Heart right ventricle (tissue), 16 donors: ENCODE measurements at regions of chr4 and their contacts with region 1.

Region 1: DNA sequence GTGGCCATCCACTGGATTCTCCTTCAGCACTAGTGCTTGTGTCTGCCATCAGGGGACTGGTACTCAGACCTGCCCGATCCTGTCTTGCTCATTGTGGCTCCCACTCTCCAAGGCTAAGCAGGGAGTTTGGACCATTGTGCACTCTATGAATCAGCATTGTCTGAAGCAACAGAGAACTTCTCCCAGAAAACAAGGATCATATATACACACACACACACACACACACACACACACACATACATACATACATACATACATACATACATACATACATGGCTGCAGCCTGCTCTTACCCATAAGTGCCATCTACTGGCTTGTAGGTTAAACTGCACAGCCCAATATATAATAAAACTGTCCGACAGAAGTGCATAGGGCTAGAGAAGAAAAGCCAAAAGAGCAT is 345.3 kb upstream of the LCORL start:
- DNase-seq: no peak
- ATAC-seq: peak in 4 of 8 donors; percentile 15 to 53 (median 46)
- H3K4me3 ChIP-seq: no peak overlapping the region
- H3K27ac ChIP-seq: no peak overlapping the region
- H3K4me1 ChIP-seq: no peaks in the 10 kb centered on the region
- H3K27me3 ChIP-seq: no peaks in the 10 kb centered on the region
- CTCF ChIP-seq: peak in 8 of 9 donors; percentile 7 to 55 (median 50)

Region 2: DNA sequence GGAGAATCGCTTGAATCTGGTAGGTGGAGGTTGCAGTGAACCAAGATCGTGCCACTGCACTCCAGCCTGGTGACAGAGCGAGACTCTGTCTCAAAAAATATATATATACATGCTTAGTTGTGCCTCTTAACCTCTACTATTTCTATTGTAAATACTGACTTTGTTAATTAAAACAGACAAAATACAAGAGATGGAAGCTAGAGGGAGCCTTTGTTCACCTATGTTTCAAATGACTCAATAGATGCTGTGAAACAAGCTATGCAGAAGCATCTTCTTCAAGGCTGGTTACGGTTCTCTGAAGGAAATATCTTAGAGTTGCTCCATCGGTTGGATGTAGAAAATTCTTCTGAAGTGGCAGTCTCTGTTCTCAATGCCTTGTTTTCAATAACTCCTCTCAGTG is 549.9 kb before region 1 on chr4:
- intact Hi-C with region 1: loop called in 9 of 10 experiments (anchors 5 to 10 kb)
- DNase-seq: no peak
- ATAC-seq: peak in 3 of 8 donors; percentile 50 to 73 (median 52)
- H3K4me3 ChIP-seq: no peak overlapping the region
- H3K27ac ChIP-seq: no peak overlapping the region
- H3K4me1 ChIP-seq: peaks cover 0 to 14% (median 0%) of the 10 kb centered on the region in 9 donors
- H3K27me3 ChIP-seq: no peaks in the 10 kb centered on the region
- CTCF ChIP-seq: peak; percentile 39 to 70 (median 58)

Region 3: DNA sequence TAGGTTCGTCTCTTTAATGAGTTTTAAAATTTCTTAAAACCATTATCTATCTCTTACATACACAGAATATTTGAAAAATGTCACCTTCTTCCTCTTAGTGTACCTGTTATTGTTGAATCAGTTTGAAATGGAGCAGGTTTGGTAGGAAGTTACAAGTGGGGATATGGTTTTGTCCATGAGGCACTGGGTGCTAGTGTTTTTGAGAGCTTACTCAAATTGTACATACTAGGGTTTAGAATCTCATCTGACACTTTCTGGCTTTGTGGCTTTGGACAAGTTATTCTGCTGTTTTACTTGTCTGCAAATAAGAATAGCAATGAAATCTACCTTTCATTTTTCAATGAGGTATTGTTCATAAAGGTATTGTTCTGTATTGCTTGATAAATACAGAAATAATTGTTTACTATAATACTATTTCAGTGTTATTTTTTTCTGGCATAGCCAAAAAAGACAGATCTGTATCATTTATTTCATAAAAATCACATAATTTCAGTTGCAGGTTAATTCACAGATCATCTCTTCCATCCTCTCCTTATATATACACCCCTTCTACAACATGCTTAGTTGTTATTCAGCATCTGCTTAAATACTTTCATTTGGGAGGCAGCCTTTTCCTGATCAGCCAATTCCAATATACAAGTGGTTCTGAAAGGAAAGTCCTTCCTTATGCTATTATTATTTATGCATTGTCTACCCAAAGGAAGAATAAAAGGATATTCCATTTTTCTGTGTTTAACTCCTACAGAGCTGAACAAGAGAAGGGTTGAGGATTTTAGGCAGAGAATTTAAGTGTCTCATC is 542.8 kb before region 1 on chr4:
- intact Hi-C with region 1: loop called in 9 of 10 experiments (anchors 5 to 10 kb)
- DNase-seq: no peak
- ATAC-seq: no peak
- H3K4me3 ChIP-seq: no peak overlapping the region
- H3K27ac ChIP-seq: no peak overlapping the region
- H3K4me1 ChIP-seq: no peaks in the 10 kb centered on the region
- H3K27me3 ChIP-seq: no peaks in the 10 kb centered on the region
- CTCF ChIP-seq: no peak

Region 4: DNA sequence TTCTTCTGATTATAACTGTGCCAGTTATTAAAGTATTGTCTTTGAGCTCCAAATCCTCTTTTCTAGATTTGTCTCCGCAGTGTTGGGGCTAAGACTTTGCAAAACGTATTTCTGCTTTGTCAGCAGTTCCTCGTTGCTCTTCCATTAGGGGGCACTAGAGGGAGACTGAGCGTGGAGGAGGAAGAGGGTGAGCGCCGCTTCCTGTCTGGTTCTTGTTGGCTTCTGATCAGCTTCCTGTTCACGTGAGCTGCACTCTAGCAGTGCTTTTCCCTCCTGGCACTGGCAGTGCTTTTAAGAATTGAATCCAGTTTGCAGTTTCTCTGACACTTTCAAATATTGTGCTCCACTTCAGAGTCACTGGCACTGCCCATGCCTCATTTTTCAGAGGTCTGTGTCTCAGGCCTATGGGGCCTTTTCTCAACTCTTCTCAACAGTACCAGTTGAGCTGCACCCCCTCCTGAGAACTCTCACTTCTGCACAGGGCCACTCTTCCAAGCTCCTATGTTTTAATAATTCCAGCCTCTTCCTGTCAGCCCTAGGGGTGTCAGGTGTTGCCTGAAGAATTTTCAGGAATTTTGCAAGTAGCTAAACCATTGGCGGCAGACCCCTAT is 291.0 kb before region 1 on chr4:
- intact Hi-C with region 1: loop called in 1 of 10 experiments (anchors 10 kb)
- DNase-seq: peak; percentile 14 to 45
- ATAC-seq: peak in 7 of 8 donors; percentile 63 to 82 (median 77)
- H3K4me3 ChIP-seq: no peak overlapping the region
- H3K27ac ChIP-seq: peak overlapping the region in 1 of 10 donors; percentile 12
- H3K4me1 ChIP-seq: peaks cover 0 to 16% (median 4%) of the 10 kb centered on the region in 9 donors
- H3K27me3 ChIP-seq: peaks cover 0 to 3% (median 0%) of the 10 kb centered on the region in 7 donors
- CTCF ChIP-seq: peak in 8 of 9 donors; percentile 34 to 67 (median 52)

Region 5: DNA sequence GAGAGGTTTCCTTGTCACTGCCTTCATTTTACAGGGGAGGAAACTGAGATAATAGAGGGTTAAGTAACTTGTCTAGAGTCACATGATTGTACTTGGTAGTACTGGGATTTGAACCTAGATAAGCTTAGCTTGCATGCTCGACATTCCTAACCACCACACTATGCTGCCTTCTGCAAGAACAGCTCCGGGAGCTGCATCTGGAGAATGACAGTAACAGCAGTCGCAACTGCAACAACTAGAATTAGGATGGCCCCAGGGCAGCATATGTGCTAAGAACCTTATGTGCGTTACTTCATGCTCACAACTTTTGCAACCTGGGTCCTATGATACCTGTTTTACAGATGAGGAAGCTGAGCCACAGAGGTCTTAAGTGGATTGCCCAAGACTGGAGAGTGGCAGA is 255.8 kb before region 1 on chr4:
- intact Hi-C with region 1: loop called in 1 of 10 experiments (anchors 10 kb)
- DNase-seq: no peak
- ATAC-seq: no peak
- H3K4me3 ChIP-seq: no peak overlapping the region
- H3K27ac ChIP-seq: peak overlapping the region in 1 of 10 donors; percentile 8
- H3K4me1 ChIP-seq: peaks cover 0 to 42% (median 6%) of the 10 kb centered on the region in 9 donors
- H3K27me3 ChIP-seq: peaks cover 0 to 9% (median 0%) of the 10 kb centered on the region in 7 donors
- CTCF ChIP-seq: no peak

Region 6: DNA sequence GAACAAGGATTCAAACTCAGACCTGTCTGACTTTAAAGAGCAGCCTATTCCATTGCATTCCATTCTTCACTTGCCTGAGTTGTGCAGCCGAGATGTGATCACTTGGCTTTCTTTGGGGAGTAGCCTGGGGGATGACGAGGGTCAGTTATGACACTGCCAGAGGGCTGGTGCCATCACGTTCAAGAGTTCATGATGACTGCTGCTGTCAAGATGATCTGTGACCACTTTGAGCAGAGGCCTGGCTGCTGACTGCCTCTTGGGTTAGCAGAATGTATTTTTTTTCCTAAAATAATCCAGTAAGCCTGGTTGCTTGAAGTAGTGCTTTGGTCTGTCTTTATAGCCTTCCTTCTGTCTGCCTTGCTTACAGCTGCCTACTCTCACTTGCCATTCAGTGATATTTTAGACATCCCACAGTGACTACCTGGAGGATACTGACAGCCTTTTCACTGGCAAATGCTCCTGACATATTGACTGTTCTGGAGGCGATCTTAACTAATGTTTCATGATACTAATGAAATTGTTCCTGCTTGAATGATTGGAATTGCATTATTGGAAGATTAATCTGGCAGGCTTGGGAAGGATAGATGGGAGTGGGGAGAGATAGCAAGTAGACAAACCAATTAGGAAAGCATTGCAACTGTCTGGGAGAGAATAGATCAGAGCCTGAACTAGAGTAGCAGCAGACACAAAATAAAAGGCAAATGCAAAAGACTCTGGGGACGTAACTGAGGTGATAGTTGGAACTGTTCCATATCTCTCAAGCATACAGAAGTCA is 123.8 kb before region 1 on chr4:
- intact Hi-C with region 1: no loop called
- DNase-seq: no peak
- ATAC-seq: no peak
- H3K4me3 ChIP-seq: no peak overlapping the region
- H3K27ac ChIP-seq: no peak overlapping the region
- H3K4me1 ChIP-seq: no peaks in the 10 kb centered on the region
- H3K27me3 ChIP-seq: no peaks in the 10 kb centered on the region
- CTCF ChIP-seq: no peak